IMR-90 (cell line): ENCODE measurements at regions of chr11 and their contacts with region 1.

Region 1: GRCh38 chr11:106399076-106399511 is 321.6 kb downstream of the AASDHPPT start:
- DNase-seq: peak; percentile 100
- ATAC-seq: peak; percentile 96
- H3K4me3 ChIP-seq: no peak overlapping the region
- H3K27ac ChIP-seq: peak overlapping the region; percentile 90
- H3K4me1 ChIP-seq: peaks cover 15% of the 10 kb centered on the region
- H3K27me3 ChIP-seq: no peaks in the 10 kb centered on the region
- CTCF ChIP-seq: no peak
- POLR2A ChIP-seq: 0 out of 2 replicates have a peak, but pooled peaks have one; percentile 17
- RAD21 ChIP-seq: no peak; the same call in 1 of the 2 replicates

Region 2: GRCh38 chr11:106344394-106344793 is 54.7 kb before region 1 on chr11:
- CTCF ChIA-PET with region 1: no interaction called
- POLR2A ChIA-PET with region 1: no interaction called
- dilution Hi-C with region 1: no loop called
- in situ Hi-C with region 1: no loop called
- intact Hi-C with region 1: no loop called
- DNase-seq: peak; percentile 75
- ATAC-seq: peak; percentile 75
- H3K4me3 ChIP-seq: no peak overlapping the region
- H3K27ac ChIP-seq: no peak overlapping the region
- H3K4me1 ChIP-seq: 0 out of 2 replicates have a peak, but pooled peaks cover 2% of the 10 kb centered on the region
- H3K27me3 ChIP-seq: no peaks in the 10 kb centered on the region
- CTCF ChIP-seq: no peak
- POLR2A ChIP-seq: no peak
- RAD21 ChIP-seq: no peak

Region 3: DNA sequence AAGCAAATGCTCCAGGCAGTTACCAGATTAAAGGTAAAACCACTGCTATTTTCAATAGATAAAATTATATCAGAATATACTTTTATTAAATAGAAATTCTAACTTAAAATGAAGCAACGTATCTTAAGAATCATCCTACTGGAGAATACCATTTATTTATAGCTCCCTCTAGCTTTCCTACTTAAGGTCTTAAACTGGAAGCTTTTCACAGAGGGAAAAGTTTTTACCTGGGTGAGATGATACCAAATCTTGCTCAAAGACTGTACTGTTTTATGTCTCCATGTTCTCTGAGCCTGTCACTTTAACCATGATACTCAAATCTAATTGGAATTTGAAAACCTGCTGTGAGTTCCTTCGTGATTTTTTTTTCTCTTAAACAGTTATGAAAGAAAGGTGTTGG is 29.9 kb before region 1 on chr11:
- CTCF ChIA-PET with region 1: no interaction called
- POLR2A ChIA-PET with region 1: no interaction called
- dilution Hi-C with region 1: no loop called
- in situ Hi-C with region 1: no loop called
- intact Hi-C with region 1: loop called (anchors 2 kb)
- DNase-seq: peak; percentile 14
- ATAC-seq: peak; percentile 7; the same call in 1 of the 2 replicates
- H3K4me3 ChIP-seq: no peak overlapping the region
- H3K27ac ChIP-seq: no peak overlapping the region
- H3K4me1 ChIP-seq: peaks cover 5% of the 10 kb centered on the region; the same call in 1 of the 2 replicates
- H3K27me3 ChIP-seq: no peaks in the 10 kb centered on the region
- CTCF ChIP-seq: no peak
- POLR2A ChIP-seq: no peak
- RAD21 ChIP-seq: no peak